ENCODE measurements at regions of chr1 and their contacts with region 1.

Region 1: DNA sequence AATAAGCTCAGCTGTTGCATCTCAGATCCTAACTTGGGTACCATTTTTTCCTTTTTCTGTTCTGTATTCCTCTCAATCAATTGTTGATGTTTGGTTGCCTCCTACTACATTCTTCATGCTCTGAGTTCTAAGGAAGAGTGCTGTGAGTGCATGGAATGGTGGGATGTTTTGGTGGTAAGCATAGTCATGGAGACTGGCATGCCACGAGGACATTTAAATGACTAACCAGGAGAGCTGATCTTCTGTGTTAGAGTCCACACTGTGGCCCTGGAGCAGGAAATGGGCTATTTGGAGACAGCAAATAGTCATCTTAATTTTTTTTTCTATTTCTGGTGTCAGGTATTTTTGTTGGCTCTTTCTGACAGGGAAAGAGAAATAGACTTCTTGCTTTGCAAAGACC is 69.5 kb upstream of the HSD17B7 start:
- DNase-seq: no peak
- ATAC-seq: no peak
- H3K4me3 ChIP-seq: no peak overlapping the region
- H3K27ac ChIP-seq: no peak overlapping the region
- H3K4me1 ChIP-seq: peaks cover 0 to 10% (median 0%) of the 10 kb centered on the region in 12 donors
- H3K27me3 ChIP-seq: no peaks in the 10 kb centered on the region
- CTCF ChIP-seq: no peak
- POLR2A ChIP-seq: no peak

Region 2: GRCh38 chr1:162649583-162649982 is 71.4 kb before region 1 on chr1:
- intact Hi-C with region 1: no loop called
- DNase-seq: no peak
- ATAC-seq: no peak
- H3K4me3 ChIP-seq: no peak overlapping the region
- H3K27ac ChIP-seq: no peak overlapping the region
- H3K4me1 ChIP-seq: peaks cover 0 to 26% (median 0%) of the 10 kb centered on the region in 12 donors
- H3K27me3 ChIP-seq: no peaks in the 10 kb centered on the region
- CTCF ChIP-seq: no peak
- POLR2A ChIP-seq: no peak

Region 3: DNA sequence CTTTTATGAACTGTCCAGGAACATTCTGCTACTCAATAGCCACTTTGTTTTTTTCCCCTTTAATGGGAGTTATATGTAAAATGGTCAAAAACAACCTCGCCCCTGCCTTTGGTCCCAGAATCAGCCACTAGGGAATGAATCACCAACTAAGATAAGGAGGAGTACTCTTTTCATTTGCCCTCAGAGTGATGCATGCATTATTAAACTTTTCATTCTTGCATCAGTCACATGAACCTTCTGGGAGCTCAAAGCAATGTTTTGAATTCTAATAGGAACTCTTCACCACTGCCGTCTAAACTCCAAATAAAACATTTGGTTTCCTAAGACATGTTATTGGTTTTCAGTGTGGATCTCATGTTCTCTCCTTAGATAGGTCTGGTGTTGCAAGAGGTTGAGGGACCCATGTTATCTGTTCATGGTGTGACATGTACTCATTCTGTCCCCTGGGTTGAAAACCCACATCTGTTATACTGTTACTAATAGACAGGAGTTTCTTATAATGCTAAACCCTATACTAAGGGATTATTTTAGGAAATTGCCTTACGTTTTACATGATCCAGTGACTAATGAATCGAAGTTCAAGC is 51.7 kb after region 1 on chr1:
- intact Hi-C with region 1: loop called in 1 of 10 experiments (anchors 5 kb)
- DNase-seq: no peak
- ATAC-seq: peak; percentile 26 to 82 (median 62)
- H3K4me3 ChIP-seq: no peak overlapping the region
- H3K27ac ChIP-seq: peak overlapping the region in 1 of 12 donors; percentile 34
- H3K4me1 ChIP-seq: no peaks in the 10 kb centered on the region
- H3K27me3 ChIP-seq: no peaks in the 10 kb centered on the region
- CTCF ChIP-seq: no peak
- POLR2A ChIP-seq: no peak

Measured in heart left ventricle (tissue), 16 donors.